ENCODE measurements at regions of chr15 and their contacts with region 1.

Region 1: GRCh38 chr15:59094077-59094476 is 10.9 kb upstream of the CCNB2 start:
- H3K4me3 Mint-ChIP-seq: no peak overlapping the region
- H3K27ac Mint-ChIP-seq: no peak overlapping the region
- H3K4me1 Mint-ChIP-seq: no peaks in the 10 kb centered on the region
- H3K27me3 Mint-ChIP-seq: no peaks in the 10 kb centered on the region

Region 2: DNA sequence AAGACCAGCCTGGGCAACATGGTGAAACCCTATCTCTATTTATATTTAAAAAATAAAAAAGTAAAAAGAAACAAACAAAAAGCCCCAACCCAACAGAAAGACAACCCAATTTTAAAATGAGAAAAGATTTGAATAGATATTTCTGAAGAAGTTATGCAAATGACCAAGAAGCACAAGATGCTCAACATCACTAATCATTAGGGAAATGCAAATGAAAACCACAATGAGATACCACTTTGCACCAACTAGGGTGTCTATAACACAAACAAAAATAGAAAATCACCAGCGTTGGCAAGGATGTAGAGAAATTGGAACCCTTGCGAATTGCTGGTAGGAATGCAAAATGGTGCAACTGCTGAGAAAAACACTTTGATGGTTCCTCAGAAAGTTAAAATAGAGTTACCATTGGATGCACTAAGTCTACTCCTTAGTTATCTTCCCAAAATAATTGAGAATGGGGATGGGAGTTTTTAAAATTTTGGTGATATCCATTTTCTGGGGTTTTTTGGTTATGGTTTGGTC is 34.9 kb before region 1 on chr15:
- intact Hi-C with region 1: loop called (anchors 5 kb)
- H3K4me3 Mint-ChIP-seq: no peak overlapping the region
- H3K27ac Mint-ChIP-seq: no peak overlapping the region
- H3K4me1 Mint-ChIP-seq: peaks cover 6% of the 10 kb centered on the region
- H3K27me3 Mint-ChIP-seq: no peaks in the 10 kb centered on the region

Measured in dendritic cell treated with granulocyte-macrophage colony-stimulating factor and Interleukin-4, amounts not matched to agents 40 ng/mL and 50 ng/mL, for 4 days (primary cell).